ENCODE measurements at regions of chr10 and their contacts with region 1.

Region 1: GRCh38 chr10:8712381-8713055 is 658.0 kb downstream of the GATA3 start:
- DNase-seq: no peak

Region 2: GRCh38 chr10:8444630-8445029 is 267.9 kb before region 1 on chr10:
- CTCF ChIA-PET with region 1: interaction called, 10 read pairs
- POLR2A ChIA-PET with region 1: no interaction called
- DNase-seq: peak; percentile 49

Measured in HEK293T (cell line).